ENCODE measurements at regions of chr12 and their contacts with region 1.

Region 1: DNA sequence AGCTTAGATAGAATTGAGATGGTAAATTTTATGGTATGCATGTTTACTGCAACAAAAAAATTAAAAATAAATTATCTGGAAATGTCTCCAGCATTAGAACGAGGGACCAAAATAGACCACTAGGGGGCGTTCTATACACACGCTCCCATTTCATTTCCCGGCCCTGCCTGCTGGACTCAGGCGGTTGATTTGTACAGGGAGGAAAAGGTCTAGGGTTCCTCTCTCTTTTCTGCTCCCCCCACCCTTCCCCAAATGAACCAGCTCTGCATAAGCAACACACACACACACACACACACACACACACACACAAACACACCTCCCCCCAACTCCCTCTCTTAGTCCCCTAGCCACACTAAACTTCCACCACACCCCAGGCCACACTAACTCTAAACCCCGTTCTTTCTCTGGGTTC is 7.8 kb upstream of the DTX1 start:
- DNase-seq: peak in 6 of 10 donors; percentile 54 to 72 (median 66)
- H3K4me3 ChIP-seq: no peak overlapping the region
- H3K27ac ChIP-seq: no peak overlapping the region
- H3K27me3 ChIP-seq: peaks cover 0 to 7% (median 0%) of the 10 kb centered on the region in 45 donors
- CTCF ChIP-seq: peak; percentile 73 to 93 (median 86)

Region 2: DNA sequence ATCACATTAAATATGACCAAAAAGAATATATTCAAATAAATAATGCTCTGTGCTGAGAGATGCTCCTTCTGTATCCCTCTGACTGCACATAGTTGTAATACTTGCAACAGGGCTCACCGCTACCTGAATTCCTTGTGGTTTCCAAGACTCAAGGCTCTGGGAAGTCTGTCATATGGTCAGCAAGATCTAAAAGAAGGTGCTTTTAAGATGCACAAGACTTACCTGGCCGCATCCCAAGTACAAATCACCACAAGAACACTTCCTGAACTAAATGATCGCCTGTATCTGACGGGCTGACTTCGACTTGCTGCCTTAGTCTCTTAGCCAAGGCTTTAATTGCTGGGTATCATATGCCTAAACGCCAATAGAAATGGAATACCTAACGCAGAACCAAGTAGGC is 733.7 kb before region 1 on chr12:
- intact Hi-C with region 1: no loop called
- DNase-seq: no peak
- H3K4me3 ChIP-seq: no peak overlapping the region
- H3K27ac ChIP-seq: no peak overlapping the region
- H3K27me3 ChIP-seq: no peaks in the 10 kb centered on the region
- CTCF ChIP-seq: no peak

Region 3: DNA sequence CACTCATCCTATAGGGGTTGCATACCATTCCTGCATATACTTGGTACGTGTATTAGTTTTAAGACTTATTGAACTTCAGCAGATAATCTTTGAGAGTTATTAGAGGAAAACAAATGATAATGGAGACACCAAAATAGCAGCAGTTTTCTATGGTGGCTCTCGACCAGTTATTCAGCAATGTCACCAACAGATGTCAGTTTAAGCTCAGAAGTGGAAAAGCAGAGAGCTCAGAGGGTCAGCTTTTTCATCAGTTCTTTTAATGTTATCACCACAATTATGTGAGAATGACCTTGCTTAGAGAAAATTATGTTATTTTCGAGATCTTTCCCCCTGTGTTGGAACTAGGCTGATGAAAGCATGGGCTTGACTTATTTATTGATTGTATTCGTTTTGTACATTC is 598.0 kb before region 1 on chr12:
- intact Hi-C with region 1: loop called in 1 of 2 experiments (anchors 10 kb)
- DNase-seq: peak in 1 of 10 donors; percentile 12
- H3K4me3 ChIP-seq: no peak overlapping the region
- H3K27ac ChIP-seq: peak overlapping the region in 26 of 59 donors; percentile 0 to 66 (median 34)
- H3K27me3 ChIP-seq: no peaks in the 10 kb centered on the region
- CTCF ChIP-seq: peak in 54 of 56 donors; percentile 31 to 75 (median 55)

Region 4: GRCh38 chr12:113065126-113066007 is 16.6 kb after region 1 on chr12:
- intact Hi-C with region 1: no loop called
- DNase-seq: no peak
- H3K4me3 ChIP-seq: no peak overlapping the region
- H3K27ac ChIP-seq: peak overlapping the region in 11 of 59 donors; percentile 2 to 41 (median 18)
- H3K27me3 ChIP-seq: peaks cover 0 to 6% (median 0%) of the 10 kb centered on the region in 45 donors
- CTCF ChIP-seq: no peak

Region 5: GRCh38 chr12:113098446-113098896 is 49.7 kb after region 1 on chr12:
- intact Hi-C with region 1: loop called (anchors 2 to 5 kb)
- DNase-seq: peak; percentile 76 to 92 (median 86)
- H3K4me3 ChIP-seq: peak overlapping the region in 42 of 59 donors; percentile 4 to 61 (median 36)
- H3K27ac ChIP-seq: peak overlapping the region; percentile 33 to 94 (median 84)
- H3K27me3 ChIP-seq: peaks cover 0 to under 1% (median 0%) of the 10 kb centered on the region in 45 donors
- CTCF ChIP-seq: peak; percentile 39 to 93 (median 82)

Region 6: DNA sequence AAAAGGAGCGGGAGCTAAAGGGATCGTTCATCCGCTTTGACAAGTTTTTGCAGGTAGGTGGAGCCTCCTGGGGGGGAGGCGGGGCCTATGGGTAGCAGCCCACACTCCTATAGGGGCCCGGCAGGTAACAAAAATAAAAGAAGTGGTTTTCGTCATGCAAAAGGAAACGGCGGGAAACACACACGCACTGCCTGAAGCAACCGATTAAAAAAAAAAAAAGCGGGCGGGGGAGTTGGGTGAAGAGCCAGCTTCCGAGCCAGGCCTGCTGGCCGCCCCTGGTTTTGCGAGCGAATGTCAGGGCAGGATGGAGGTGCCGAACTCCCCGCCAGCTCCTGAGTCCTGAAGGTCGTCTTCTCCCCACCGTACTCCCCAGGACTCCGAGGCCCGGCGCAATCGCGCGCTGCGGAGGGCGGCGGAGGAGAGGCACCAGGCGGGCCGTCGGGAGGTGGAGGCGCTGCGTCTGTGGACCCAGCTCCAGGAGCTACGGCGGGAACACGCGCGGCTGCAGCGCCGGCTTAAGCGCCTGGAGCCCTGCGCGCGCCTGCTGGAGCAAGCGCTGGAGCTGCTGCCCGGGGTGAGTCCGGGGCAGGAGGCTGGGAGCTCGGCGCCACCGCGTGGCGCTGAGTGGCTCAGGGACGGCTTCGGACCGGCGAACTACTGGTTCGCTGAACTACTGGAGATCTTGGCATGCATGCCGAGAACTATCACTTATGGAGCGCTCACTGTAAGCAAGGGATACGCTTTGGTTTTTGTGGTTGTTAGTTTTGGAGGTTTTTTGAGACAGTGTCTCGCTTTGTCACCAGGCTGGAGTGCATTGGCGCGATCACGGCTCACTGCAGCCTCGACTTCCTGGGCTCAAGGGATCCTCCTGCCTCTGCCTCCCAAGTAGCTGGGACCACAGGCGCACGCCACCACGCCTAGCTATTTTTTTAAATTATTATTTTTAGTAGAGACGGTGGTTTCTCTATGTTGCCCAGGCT is 104.4 kb after region 1 on chr12:
- intact Hi-C with region 1: loop called (anchors 2 to 5 kb)
- DNase-seq: peak; percentile 66 to 87 (median 74)
- H3K4me3 ChIP-seq: peak overlapping the region; percentile 30 to 74 (median 55)
- H3K27ac ChIP-seq: peak overlapping the region in 29 of 59 donors; percentile 1 to 78 (median 55)
- H3K27me3 ChIP-seq: peaks cover 0 to 12% (median 0%) of the 10 kb centered on the region in 45 donors
- CTCF ChIP-seq: peak; percentile 35 to 91 (median 73)

Region 7: GRCh38 chr12:113174461-113175384 is 126.0 kb after region 1 on chr12:
- intact Hi-C with region 1: loop called (anchors 1 to 2 kb)
- DNase-seq: peak; percentile 58 to 85 (median 80)
- H3K4me3 ChIP-seq: no peak overlapping the region
- H3K27ac ChIP-seq: peak overlapping the region in 1 of 59 donors; percentile 3
- H3K27me3 ChIP-seq: no peaks in the 10 kb centered on the region
- CTCF ChIP-seq: peak; percentile 93 to 100 (median 99)